AG04450 (cell line): ENCODE measurements at regions of chr19 and their contacts with region 1.

Region 1: GRCh38 chr19:1269065-1269477 is at the start of gene CIRBP:
- DNase-seq: peak; percentile 98
- H3K4me3 ChIP-seq: peak within 1 kb of the TSS; percentile 94
- H3K27ac ChIP-seq: peak within 1 kb of the TSS; percentile 94
- H3K27me3 ChIP-seq: no peaks in the 10 kb centered on the region
- CTCF ChIP-seq: no peak
- polyA plus RNA-seq, gene CIRBP: 269 and 274 TPM in 2 replicates

Region 2: GRCh38 chr19:1020868-1021425 is 248.1 kb before region 1 on chr19 and contains the start of gene TMEM259:
- CTCF ChIA-PET with region 1: no interaction called
- POLR2A ChIA-PET with region 1: interaction called, 13 read pairs
- DNase-seq: peak; percentile 93
- H3K4me3 ChIP-seq: peak within 1 kb of the TSS; percentile 91
- H3K27ac ChIP-seq: peak within 1 kb of the TSS; percentile 82
- H3K27me3 ChIP-seq: no peaks in the 10 kb centered on the region
- CTCF ChIP-seq: no peak
- polyA plus RNA-seq, gene TMEM259: 55.8 and 74.0 TPM in 2 replicates

Region 3: DNA sequence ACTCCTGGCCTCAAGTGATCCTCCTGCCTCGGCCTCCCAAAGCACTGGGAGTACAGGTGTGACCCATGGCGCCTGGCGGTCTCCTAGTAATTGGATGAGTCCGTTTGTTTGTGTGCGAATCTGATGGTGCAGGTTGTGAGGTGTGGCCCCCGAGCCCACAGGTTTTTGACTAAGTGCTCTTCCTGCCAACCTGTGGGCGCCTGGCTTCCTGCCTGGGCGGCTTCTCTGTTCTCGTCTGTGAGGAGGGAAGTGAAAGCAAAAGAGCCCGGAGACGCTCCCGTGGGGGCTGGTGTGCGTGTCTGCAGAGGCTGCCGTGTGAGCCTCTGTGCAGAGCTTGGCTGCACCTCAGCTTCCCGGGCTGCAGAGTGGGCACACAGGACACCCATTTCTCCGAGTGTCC is 192.1 kb before region 1 on chr19:
- CTCF ChIA-PET with region 1: no interaction called
- POLR2A ChIA-PET with region 1: interaction called, 10 read pairs
- DNase-seq: no peak
- H3K4me3 ChIP-seq: no peak overlapping the region
- H3K27ac ChIP-seq: no peak overlapping the region
- H3K27me3 ChIP-seq: no peaks in the 10 kb centered on the region
- CTCF ChIP-seq: no peak

Region 4: GRCh38 chr19:1249298-1249989 is 19.6 kb before region 1 on chr19:
- CTCF ChIA-PET with region 1: interaction called, 224 read pairs
- POLR2A ChIA-PET with region 1: interaction called, 241 read pairs
- DNase-seq: peak; percentile 89
- H3K4me3 ChIP-seq: peak overlapping the region; percentile 86
- H3K27ac ChIP-seq: peak overlapping the region; percentile 78
- H3K27me3 ChIP-seq: no peaks in the 10 kb centered on the region
- CTCF ChIP-seq: no peak

Region 5: GRCh38 chr19:1309977-1310852 is 41.1 kb after region 1 on chr19:
- CTCF ChIA-PET with region 1: no interaction called
- POLR2A ChIA-PET with region 1: no interaction called
- DNase-seq: no peak
- H3K4me3 ChIP-seq: no peak overlapping the region
- H3K27ac ChIP-seq: no peak overlapping the region
- H3K27me3 ChIP-seq: peaks cover 9% of the 10 kb centered on the region
- CTCF ChIP-seq: no peak

Region 6: DNA sequence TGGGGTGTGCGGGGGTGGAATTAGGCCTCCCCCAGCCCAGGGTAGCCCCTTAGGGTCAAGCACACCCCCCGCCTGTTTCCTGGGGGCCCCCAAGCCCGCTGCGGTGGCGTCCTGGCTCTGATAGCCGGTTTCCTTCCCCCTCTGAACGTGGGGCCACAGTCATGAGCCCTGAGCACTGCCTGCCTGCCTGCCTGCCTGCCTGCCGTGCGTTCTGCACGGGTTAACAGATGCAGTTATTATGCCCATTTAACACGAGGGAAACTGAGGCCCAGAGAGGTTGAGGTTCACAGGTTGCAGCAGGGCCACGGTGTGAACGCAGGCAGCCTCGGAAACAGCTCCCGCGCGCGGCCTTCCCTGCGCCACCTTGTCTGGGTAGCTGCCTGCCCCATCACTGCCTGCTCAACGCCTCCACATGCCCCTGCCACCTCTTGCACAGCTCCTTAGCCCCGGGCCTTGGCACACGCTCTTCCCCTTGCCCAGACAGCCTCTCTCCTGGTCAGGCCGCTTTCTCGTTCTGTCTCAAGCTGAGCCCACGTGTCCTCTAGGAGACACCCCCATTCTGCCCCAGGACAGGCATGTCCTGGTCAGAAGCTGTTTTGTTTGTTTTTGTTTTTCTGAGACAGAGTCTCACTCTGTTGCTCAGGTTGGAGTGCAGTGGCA is 133.5 kb after region 1 on chr19:
- CTCF ChIA-PET with region 1: no interaction called
- POLR2A ChIA-PET with region 1: interaction called, 15 read pairs
- DNase-seq: no peak
- H3K4me3 ChIP-seq: no peak overlapping the region
- H3K27ac ChIP-seq: no peak overlapping the region
- H3K27me3 ChIP-seq: no peaks in the 10 kb centered on the region
- CTCF ChIP-seq: no peak

Region 7: GRCh38 chr19:1510442-1510806 is 241.4 kb after region 1 on chr19:
- CTCF ChIA-PET with region 1: no interaction called
- POLR2A ChIA-PET with region 1: no interaction called
- DNase-seq: no peak
- H3K4me3 ChIP-seq: no peak overlapping the region
- H3K27ac ChIP-seq: no peak overlapping the region
- H3K27me3 ChIP-seq: peaks cover 5% of the 10 kb centered on the region
- CTCF ChIP-seq: no peak